HAP-1 (cell line): ENCODE measurements at regions of chr17 and their contacts with region 1.

Region 1: DNA sequence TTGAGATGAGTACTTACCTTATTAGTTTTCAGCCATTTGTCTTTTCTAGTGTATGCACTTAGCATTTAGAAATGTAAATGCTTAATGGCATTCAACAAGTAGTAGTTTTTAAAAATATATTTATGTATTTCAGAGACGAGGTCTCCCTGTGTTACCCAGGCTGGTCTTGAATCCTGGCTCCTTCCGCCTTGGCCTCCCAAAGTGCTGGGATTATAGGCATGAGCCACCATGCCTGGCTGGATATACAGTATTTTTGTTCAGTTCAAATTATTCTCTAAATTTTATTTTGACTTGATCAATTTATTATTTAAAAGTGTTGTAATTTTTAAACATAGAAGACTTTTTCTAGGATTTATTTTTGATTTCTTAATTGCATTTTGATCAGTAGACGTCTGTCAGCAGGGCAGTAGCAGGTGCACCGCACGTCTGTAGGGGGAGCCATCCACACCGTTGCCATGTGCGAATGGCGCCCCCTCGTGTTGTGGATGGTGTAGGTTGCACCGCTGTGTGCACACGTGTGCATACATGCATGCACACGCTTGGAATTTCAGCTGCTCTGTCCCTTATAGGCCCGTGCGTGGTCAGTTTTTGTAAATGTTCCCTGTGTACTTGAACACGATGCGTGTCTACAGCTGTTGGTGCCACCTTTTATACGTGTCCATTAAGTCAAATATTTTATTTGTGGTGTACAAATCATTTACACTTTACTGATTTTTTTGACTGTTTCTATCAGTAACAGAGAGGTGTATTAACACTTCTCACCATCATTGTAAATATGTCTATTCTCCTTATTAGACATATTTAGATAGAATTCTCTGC is 30.6 kb downstream of the RPTOR start:
- DNase-seq: peak; percentile 80 to 97
- H3K4me3 ChIP-seq: no peak overlapping the region
- H3K4me1 ChIP-seq: peaks cover 4% of the 10 kb centered on the region; the same call in 1 of the 2 replicates
- H3K27me3 ChIP-seq: no peaks in the 10 kb centered on the region

Region 2: DNA sequence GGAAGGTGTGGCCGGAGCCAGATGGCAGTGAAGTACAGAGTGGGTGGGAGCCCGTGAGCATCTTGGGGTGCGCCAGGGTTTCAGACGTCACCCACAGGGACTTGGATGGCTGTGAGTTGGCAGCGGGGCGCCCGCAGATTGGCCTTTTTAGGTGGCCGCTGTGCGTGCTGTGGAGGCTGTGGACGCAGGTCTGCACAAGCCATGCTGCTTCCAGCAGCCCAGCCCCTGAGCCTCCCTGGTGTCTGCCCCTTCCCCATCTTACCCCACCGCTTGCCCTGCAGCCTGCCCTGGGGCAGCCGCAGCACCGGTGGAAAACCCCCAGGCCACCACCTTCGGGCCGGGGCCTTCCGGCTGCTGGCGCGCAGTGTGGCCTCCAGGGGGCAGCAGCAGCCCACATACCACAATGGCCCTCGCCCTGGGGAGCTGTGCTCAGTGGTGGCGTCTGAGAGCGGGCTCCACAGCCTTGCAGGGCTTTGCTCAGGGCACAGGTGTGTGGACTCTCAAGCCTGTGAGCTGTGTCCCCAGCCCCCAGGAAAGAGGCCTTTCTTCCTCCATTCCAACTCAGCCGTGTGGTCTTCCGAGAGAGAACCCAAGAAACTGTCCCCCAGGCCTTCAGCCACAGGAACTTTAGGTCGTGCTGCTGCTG is 148.5 kb before region 1 on chr17:
- in situ Hi-C with region 1: loop called (anchors 5 kb)
- DNase-seq: peak; percentile 47 to 89
- H3K4me3 ChIP-seq: no peak overlapping the region
- H3K4me1 ChIP-seq: no peaks in the 10 kb centered on the region
- H3K27me3 ChIP-seq: no peaks in the 10 kb centered on the region

Region 3: DNA sequence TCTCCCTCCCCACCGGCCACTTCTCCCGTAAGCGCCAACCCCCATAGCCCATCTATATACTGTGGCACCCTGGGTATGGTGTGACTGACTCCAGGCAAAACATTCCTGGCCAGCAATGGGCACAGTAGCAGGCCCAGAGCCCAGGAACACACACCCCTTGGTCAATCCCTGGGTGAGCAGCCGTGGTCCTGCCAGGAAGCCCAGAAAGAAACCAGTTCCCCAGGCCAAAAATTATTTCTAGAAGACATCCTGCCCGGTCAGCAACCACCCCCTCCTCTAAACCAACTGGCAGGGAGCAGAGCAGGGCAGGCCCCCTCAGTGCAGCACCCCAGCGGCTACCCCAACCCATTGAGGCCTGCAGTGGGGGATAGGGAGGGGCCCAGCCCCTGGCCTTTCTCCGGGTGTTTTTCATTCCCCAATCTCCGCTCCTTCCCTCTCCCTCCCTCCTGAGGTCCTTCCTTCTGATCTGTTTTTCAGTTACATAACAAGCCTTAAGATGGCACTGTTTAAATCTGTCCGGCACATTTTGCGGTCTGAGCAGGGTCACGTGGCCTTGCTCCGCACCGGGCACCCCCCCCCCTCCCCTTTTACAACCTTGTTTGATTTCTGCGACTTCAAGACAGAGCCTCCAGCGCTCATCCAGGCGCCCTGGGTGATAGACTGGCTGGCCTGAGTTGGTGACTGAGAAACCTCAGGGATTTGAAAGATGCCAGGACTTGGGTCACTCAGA is 100.9 kb before region 1 on chr17:
- in situ Hi-C with region 1: loop called (anchors 5 kb)
- DNase-seq: peak; percentile 84 to 89
- H3K4me3 ChIP-seq: peak overlapping the region; percentile 56
- H3K4me1 ChIP-seq: no peaks in the 10 kb centered on the region
- H3K27me3 ChIP-seq: peaks cover 7% of the 10 kb centered on the region; the same call in 1 of the 2 replicates

Region 4: DNA sequence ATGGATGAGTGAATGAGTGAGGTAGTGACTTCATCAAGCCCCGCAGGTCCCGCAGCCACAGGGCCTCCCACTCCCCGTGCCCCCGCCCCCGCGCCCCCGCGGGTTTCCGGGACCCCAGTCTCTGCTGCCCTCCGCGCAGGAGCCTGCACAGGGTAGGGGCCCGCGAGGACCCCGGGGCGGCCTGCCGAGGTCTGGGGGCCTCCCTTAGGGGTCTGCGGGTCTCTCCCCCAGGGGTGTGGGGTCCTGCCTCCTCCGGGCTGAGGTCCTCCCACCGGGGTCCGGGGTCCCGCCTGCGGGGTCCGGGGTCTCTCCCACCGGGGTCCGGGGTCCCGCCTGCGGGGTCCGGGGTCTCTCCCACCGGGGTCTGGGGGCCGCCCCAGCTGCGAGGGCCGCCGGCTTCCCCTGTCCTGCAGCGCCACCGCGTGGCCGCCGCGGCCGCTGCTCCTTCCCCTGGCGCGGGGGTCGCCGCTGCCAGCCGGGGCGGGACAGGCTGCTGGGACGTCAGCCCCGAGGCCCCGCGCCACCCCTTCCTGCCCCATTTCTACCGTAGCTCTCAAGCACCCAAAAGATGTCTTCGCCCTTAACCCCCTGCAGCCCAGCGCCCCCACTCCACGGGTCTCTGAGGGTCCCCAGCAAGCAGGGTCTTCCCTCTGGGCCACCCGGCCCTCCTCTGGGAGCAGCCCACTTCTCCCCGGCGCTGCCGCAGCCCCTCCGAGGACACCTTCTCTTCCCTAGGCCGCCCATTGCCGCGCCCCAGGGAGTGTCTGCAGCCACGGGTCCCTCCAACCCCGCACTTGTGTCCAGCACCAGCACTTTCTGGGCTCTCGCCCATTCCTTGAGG is 406.0 kb after region 1 on chr17:
- in situ Hi-C with region 1: loop called (anchors 10 kb)
- DNase-seq: peak in 1 of 2 experiments; percentile 72
- H3K4me3 ChIP-seq: peak overlapping the region; percentile 30
- H3K4me1 ChIP-seq: no peaks in the 10 kb centered on the region
- H3K27me3 ChIP-seq: no peaks in the 10 kb centered on the region; the same call in 1 of the 2 replicates